Psoas muscle (tissue), 8 donors: ENCODE measurements at regions of chr3 and their contacts with region 1.

Region 1: DNA sequence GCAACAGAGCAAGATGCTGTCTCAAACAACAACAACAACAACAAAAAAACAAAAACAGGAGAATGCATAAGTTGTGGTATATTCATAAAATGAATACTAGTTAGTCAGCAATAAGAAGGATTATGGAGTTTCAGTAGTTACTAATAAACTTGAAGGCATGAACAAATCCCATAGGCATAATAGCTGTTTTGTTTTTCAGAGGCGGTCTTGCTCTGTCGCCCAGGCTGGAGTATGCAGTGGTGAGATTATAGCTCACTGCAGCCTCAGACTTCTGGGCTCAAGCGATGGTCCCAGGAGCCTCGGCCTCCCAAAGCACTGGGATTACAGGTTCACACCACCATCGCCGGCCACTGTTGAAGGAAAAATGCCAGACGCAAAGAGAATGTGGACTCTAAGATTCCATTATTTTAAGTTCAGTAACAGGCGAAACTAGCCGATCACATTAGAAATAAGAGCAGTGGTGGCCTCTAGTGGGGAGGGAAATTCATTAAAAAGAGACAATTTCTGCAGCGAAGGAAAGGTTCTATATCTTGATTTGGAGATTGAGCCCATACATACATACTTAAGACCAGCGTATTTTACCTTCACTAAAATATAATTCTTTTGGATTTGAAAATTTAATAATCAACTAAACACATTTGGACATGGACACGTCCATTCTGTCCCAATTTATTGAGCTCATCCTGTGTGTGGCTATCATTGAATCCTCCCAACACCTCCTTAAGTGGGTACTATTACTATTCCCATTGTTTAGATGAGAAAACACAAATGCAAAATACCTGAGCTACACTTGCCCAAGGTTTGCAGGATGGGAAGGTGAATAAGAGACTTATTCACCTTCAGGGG is 27.4 kb upstream of the HDAC11 start:
- DNase-seq: no peak
- ATAC-seq: peak in 2 of 4 donors; percentile 40 to 67
- H3K4me3 ChIP-seq: peak overlapping the region; percentile 73
- H3K27ac ChIP-seq: peak overlapping the region; percentile 75
- H3K4me1 ChIP-seq: peaks cover 3% of the 10 kb centered on the region
- H3K27me3 ChIP-seq: no peaks in the 10 kb centered on the region
- CTCF ChIP-seq: peak; percentile 62

Region 2: GRCh38 chr3:13346481-13347389 is 106.0 kb before region 1 on chr3:
- intact Hi-C with region 1: loop called in 1 of 2 experiments (anchors 10 kb)
- DNase-seq: peak; percentile 36 to 77
- ATAC-seq: peak; percentile 67 to 91 (median 90)
- H3K4me3 ChIP-seq: no peak overlapping the region
- H3K27ac ChIP-seq: peak overlapping the region; percentile 53
- H3K4me1 ChIP-seq: peaks cover 3% of the 10 kb centered on the region
- H3K27me3 ChIP-seq: no peaks in the 10 kb centered on the region
- CTCF ChIP-seq: no peak